ENCODE measurements at regions of chr2 and their contacts with region 1.

Region 1: DNA sequence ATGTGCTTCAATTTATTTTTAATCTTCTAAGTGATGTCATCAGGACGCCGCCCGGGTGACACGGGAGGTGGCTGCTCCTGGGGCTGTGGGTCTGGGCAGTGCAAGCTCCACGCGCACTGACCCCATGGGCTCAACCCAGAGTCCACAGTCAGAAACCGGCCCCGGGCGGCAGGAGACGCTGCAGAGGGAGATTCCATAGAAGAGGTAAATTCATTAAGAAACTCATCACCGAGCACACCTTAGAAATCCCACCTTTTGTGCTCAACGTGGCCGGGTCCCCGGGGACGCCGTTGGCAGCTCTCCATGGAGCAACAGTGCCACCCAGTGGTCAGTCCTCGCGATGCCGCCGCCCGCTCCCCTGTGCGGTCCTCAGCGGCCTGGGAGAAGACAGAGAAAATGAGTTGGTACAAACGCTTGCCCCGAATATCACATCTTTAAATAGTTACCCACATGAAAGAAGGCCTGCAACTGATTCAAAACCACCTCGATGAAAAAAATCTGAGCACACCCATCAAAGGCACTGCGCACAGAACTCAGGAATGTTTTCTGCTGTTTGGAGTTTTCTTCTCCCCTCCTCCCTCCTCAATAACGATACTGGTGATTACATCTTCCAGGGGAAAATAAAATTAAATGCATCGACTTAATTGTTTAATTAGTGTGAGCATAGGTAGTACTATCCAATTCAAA is 92.6 kb downstream of the CMPK2 start:
- DNase-seq: peak in 9 of 10 donors; percentile 46 to 82 (median 63)
- H3K4me3 ChIP-seq: peak overlapping the region in 50 of 59 donors; percentile 7 to 66 (median 40)
- H3K27ac ChIP-seq: no peak overlapping the region
- H3K27me3 ChIP-seq: peaks cover 0 to 30% (median 6%) of the 10 kb centered on the region in 45 donors
- CTCF ChIP-seq: peak; percentile 73 to 99 (median 97)

Region 2: DNA sequence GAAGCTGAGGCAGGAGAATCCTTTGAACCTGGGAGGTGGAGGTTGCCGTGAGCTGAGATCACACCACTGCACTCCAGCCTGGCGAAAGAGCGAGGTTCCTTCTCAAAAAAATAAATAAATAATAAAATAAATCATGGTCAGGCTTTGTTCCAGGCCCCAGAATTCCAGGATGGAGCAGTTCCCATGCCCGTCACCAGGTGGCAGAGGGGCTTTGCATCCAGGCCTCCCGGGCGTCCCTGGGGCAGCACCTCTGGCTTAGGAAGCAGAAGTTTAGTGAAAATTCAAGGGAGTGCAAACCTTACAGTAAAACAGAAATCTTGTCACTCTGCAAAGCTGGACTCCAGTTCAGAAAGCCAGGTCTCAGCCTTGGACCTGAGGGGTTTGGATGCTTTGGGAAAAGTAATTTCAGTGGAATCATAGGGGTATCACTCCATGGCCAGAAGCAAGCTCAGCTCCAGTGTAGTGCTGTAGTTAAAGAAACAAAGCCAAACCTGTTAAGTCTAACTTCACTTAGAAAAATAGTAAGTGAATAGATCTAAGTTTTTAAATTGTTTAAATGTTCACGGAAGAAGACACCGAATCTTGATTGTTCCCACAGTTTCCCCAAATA is 420.1 kb before region 1 on chr2:
- intact Hi-C with region 1: loop called (anchors 2 to 5 kb)
- DNase-seq: peak in 7 of 10 donors; percentile 5 to 58 (median 34)
- H3K4me3 ChIP-seq: no peak overlapping the region
- H3K27ac ChIP-seq: no peak overlapping the region
- H3K27me3 ChIP-seq: peaks cover 0 to 5% (median 0%) of the 10 kb centered on the region in 45 donors
- CTCF ChIP-seq: peak in 55 of 56 donors; percentile 29 to 85 (median 65)

Region 3: GRCh38 chr2:6590442-6590841 is 182.7 kb before region 1 on chr2:
- intact Hi-C with region 1: no loop called
- DNase-seq: no peak
- H3K4me3 ChIP-seq: no peak overlapping the region
- H3K27ac ChIP-seq: no peak overlapping the region
- H3K27me3 ChIP-seq: no peaks in the 10 kb centered on the region
- CTCF ChIP-seq: no peak

Region 4: DNA sequence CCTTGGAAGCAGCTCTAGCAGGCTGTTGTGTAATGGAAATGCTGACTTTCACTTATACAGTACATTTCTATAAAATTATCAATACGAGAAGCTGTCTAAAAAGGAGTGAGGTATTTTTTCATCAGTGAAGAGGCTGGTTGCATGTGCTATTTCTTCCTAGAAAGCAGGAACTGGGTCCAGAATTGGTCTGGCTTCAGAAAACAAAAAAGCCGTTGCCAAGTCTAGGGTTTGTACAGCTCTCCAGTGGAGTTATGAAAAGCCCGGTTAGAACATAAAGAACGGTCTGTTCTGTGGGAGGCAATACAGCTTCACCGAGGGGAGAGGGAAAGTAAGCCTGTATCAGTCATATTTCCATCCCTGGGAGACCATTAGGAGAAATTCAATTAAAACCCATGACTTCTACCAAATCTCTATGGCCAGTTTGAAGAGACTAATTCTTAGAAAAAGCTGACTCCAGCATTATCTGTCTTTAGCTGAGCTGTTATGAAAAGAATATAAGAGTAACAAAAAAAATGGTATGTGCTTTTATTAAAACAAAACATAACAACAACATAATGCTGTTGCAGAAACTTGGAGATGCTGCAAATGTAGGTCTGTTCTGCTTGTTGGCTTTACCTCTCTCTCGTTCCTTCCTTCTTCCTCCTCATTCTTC is 124.4 kb before region 1 on chr2:
- intact Hi-C with region 1: loop called in 1 of 2 experiments (anchors 5 kb)
- DNase-seq: peak in 1 of 10 donors; percentile 31
- H3K4me3 ChIP-seq: no peak overlapping the region
- H3K27ac ChIP-seq: no peak overlapping the region
- H3K27me3 ChIP-seq: peaks cover 0 to 67% (median 10%) of the 10 kb centered on the region in 45 donors
- CTCF ChIP-seq: peak in 1 of 56 donors; percentile 12